ENCODE measurements at regions of chr15 and their contacts with region 1.

Region 1: DNA sequence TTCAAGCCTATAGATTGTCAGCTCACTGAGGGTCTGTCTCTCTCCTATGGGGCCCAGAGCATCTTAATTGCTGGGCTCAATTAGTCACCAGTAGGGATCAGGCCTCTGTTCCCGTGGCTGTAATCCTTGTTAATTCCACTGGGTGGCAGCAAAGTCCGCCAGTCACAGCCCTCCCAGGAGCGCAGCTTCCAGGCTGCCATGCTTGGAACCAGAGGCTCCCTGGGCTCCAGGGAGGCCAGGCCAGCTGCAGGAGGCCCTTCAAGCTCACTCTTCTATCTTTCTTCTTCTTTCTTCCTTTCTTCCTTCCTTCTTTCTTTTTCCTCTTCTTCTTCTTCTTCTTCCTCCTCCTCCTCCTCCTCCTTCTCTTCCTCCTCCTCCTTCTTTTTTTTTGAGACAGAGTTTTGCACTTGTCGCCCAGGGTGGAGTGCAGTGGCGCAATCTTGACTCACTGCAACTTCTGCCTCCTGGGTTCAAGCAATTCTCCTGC is 14.4 kb downstream of the RNU5B-1 start:
- DNase-seq: peak; percentile 74 to 77
- ATAC-seq: peak; percentile 88 to 95 (median 91)
- H3K4me3 ChIP-seq: no peak overlapping the region
- H3K27ac ChIP-seq: no peak overlapping the region
- H3K4me1 ChIP-seq: peaks cover 0 to 9% (median 0%) of the 10 kb centered on the region in 9 donors
- H3K27me3 ChIP-seq: no peaks in the 10 kb centered on the region
- CTCF ChIP-seq: peak; percentile 85 to 97 (median 92)

Region 2: DNA sequence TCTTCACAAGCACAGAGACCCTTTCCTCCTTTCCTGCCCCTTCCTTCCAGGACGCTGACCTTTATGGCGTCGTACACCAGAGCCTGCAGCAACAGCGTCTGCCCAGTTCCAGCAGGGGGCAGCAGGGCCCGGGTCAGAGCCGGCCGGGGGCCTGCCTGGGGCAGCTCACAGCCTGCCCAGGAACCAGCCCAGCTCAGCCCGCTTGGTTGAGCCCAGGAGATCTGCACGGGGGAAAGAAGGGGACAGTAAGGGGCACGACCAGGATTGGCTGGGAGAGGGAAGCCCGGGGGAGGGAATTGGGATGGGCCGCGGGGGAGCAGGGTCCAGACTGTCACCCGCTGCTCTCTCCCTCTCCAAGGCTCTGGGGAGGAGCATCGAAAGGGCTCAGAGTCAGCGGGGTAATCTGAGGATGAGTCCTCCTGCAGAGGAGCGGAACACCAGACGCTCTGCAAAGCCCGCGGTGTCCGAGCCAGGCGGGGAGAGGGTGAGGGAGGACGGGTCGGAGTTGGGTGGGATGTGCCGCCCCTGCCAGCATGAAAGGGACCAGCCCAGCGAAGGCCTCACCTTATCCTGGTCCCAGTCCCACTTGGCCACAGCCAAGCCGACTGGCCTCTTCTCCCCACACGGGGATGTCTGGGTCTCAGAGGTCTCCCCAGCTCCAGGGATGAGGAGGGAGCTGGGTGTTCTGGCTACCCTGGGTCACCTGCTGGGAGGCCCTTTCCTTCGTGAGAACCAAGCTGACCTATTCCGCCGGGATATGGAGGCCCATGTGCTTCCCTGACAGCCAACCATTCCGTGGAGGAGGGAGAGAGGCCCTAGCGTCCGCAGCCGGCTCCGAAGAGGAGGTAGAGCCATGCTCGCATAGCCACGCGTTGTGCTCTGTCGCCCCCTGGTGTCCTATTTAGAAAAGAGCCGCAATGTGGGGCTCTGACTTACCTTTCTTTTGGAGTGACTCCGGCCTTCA is 66.3 kb after region 1 on chr15:
- intact Hi-C with region 1: loop called (anchors 1 to 5 kb)
- DNase-seq: peak; percentile 84 to 90
- ATAC-seq: peak; percentile 91 to 98 (median 96)
- H3K4me3 ChIP-seq: peak overlapping the region in 9 of 10 donors; percentile 18 to 48 (median 43)
- H3K27ac ChIP-seq: peak overlapping the region in 8 of 10 donors; percentile 15 to 34 (median 30)
- H3K4me1 ChIP-seq: peaks cover 7 to 25% (median 20%) of the 10 kb centered on the region in 9 donors
- H3K27me3 ChIP-seq: peaks cover 0 to 11% (median 4%) of the 10 kb centered on the region in 7 donors
- CTCF ChIP-seq: peak; percentile 80 to 91 (median 83)

Region 3: DNA sequence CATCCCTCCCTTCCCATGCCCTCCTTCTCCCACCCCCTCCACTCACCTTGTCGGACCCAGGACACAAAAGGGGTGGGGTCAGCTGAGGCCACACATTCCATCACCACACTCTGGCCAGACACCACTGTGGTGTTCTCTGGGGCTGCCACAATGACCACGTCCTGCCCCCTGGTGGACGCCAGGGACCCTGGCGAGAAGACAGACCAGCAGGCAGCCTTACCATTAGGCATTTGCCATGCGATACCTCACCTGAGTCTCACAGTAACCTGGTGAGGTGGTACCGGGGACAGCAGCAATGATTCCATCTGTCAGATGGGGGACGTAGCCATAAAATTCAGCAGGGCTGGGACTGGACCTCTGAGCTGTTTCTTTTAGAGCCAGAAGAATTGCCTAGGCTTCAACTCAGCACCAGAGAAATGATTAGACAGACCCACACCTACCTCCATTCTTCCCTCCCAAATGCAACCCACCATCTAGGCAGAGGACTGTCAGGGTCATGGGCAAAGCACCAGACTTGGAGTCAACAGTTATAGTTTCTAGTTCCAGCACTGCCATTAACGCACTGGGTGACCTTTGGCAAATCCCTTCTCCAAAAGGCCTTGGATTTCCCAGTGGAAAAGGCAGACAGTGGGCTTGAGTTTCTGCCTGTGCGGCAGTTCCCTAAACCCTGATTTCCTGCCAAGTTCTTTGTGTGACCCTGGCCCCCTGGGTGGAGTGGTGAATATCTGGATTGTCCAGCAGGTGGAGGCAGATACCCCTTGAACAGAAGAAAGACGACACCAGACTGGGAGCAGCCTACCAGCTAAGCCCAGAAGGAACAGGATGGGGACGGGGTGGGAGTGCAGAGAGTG is 82.1 kb after region 1 on chr15:
- intact Hi-C with region 1: loop called in 3 of 10 experiments (anchors 5 kb)
- DNase-seq: peak; percentile 41 to 60
- ATAC-seq: peak; percentile 76 to 87 (median 80)
- H3K4me3 ChIP-seq: no peak overlapping the region
- H3K27ac ChIP-seq: no peak overlapping the region
- H3K4me1 ChIP-seq: peaks cover 0 to 23% (median 3%) of the 10 kb centered on the region in 9 donors
- H3K27me3 ChIP-seq: peaks cover under 1 to 49% (median 30%) of the 10 kb centered on the region in 7 donors
- CTCF ChIP-seq: peak; percentile 38 to 70 (median 67)

Region 4: GRCh38 chr15:65460741-65461347 is 141.9 kb after region 1 on chr15:
- intact Hi-C with region 1: no loop called
- DNase-seq: no peak
- ATAC-seq: no peak
- H3K4me3 ChIP-seq: no peak overlapping the region
- H3K27ac ChIP-seq: no peak overlapping the region
- H3K4me1 ChIP-seq: no peaks in the 10 kb centered on the region
- H3K27me3 ChIP-seq: no peaks in the 10 kb centered on the region
- CTCF ChIP-seq: no peak

Measured in heart right ventricle (tissue), 16 donors.